Dendritic cell treated with granulocyte-macrophage colony-stimulating factor and Interleukin-4, amounts not matched to agents 40 ng/mL and 50 ng/mL, for 4 days (primary cell): ENCODE measurements at regions of chr2 and their contacts with region 1.

Region 1: DNA sequence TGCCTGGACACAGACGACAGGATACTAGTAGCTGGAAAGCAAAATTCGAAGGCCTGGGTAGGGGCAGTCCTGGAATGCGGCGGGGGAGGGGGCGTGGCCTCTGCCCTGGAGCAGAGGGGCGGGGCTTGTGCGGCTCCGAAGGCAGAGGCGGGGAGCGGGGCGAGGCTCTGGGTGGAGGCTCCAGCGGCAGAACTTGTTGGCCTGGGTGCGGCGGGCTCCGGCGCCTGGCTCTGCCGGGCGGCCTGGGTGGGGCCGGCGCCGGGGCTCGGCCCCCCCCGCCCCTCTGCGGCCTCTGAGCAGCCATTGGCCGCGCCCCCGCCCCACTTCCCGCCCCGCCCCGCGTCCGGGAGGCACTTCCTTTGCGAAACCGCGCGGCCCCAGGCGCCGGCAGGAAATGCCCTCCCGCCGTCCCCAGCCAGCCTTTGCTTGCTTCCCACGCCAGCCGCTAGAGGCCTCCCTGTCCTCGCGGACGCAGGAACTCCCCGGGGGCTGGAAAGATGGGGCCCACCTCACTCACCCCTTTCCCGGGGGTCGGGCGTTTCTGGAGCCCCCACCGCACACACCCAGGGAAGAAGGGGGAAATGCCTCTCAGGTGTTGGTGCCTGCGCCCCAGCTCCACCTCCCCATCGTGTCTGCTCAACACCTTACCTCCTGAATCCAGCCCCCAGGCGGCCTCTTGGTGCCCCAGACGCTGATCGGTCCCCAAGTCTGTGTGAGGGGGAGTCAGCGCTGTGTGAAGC is 6.7 kb downstream of the CTDSP1 start:
- H3K4me3 Mint-ChIP-seq: peak overlapping the region; percentile 60
- H3K27ac Mint-ChIP-seq: peak overlapping the region; percentile 89
- H3K4me1 Mint-ChIP-seq: peaks cover 69% of the 10 kb centered on the region
- H3K27me3 Mint-ChIP-seq: no peaks in the 10 kb centered on the region

Region 2: GRCh38 chr2:218466016-218466521 is 59.7 kb after region 1 on chr2:
- intact Hi-C with region 1: loop called (anchors 2 kb)
- H3K4me3 Mint-ChIP-seq: no peak overlapping the region
- H3K27ac Mint-ChIP-seq: no peak overlapping the region
- H3K4me1 Mint-ChIP-seq: peaks cover 9% of the 10 kb centered on the region
- H3K27me3 Mint-ChIP-seq: no peaks in the 10 kb centered on the region